ENCODE measurements at regions of chr2 and their contacts with region 1.

Region 1: DNA sequence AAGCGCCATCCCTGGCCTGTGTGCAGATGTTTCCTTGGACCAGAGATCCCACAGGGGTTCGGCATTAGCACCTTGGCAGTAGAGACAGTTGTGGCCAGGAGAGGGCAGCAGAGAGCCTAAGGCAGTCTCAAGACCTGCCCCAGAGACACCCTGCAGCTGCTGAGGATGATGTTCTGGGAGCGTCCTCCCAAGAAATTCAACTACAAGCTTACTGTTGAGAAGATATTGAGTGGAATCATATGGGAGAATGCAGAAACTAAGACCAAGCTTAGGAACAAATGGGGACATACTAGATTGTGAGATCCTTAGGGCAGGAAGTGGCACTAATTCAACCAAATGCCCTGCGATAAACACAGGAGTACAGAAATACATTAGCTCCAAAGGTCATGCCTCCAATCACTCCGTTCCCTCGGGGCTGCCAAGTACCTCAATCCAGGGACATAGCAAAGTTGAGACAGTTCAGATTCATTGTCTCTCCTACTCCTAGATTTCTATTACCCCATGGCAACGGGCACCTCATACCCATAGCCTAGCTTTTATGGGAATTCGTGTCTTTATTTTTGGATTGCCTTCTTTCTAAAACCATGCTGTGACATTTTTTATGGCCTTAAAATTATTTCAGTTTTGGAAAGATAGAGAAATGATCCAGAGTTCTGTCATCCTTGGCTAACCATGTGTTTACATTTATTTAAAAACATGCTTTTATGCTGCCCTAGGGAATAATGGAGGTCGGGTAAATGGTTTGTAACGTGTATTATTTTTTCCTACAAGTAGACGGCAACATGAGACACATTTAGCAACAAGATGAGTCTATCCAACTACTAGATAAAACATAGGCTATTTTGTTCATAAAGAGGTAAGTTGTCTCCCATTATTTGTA is 2.2 kb upstream of the ERMN start:
- DNase-seq: peak; percentile 75 to 94 (median 89)
- ATAC-seq: peak; percentile 95
- H3K4me3 ChIP-seq: peak overlapping the region in 1 of 2 experiments; percentile 2
- H3K4me3 Mint-ChIP-seq: peak overlapping the region; percentile 64
- H3K27ac ChIP-seq: no peak overlapping the region
- H3K27ac Mint-ChIP-seq: peak overlapping the region; percentile 86
- H3K4me1 ChIP-seq: peaks cover 36% of the 10 kb centered on the region
- H3K4me1 Mint-ChIP-seq: peaks cover 53% of the 10 kb centered on the region
- H3K27me3 ChIP-seq: no peaks in the 10 kb centered on the region
- H3K27me3 Mint-ChIP-seq: no peaks in the 10 kb centered on the region
- CTCF ChIP-seq: peak; percentile 87

Region 2: DNA sequence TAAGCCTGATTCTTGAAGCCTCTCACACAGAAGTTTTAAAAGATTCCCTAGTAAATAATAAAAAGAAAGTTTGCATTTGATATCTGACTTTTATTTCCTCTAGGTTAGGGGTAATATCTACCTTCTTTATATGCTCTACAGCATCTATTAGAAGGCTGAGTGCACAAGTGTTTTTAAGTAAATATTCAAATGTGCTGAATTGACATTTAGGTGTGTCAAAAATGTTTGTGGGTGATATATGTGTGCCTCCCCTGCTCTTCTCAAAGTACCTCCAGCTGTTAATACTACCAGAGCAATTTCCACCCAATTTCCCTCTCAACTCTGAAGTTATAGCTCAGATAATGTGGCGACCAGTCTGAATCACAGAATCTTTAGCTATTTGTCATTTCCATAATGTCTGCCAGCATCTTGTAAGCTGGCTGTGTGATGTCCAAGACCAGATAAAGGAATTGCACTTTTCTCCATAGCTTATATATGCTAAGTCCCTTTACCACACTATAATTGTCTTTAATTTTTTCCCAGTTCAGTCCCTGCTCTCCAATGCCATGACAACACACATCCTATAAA is 22.2 kb after region 1 on chr2:
- CTCF ChIA-PET with region 1: interaction called, 16 read pairs
- POLR2A ChIA-PET with region 1: interaction called, 4 read pairs
- intact Hi-C with region 1: loop called in 1 of 2 experiments (anchors 2 kb)
- DNase-seq: no peak
- ATAC-seq: no peak
- H3K4me3 ChIP-seq: no peak overlapping the region
- H3K4me3 Mint-ChIP-seq: no peak overlapping the region
- H3K27ac ChIP-seq: no peak overlapping the region
- H3K27ac Mint-ChIP-seq: no peak overlapping the region
- H3K4me1 ChIP-seq: peaks cover 13% of the 10 kb centered on the region
- H3K4me1 Mint-ChIP-seq: peaks cover 64% of the 10 kb centered on the region
- H3K27me3 ChIP-seq: no peaks in the 10 kb centered on the region
- H3K27me3 Mint-ChIP-seq: no peaks in the 10 kb centered on the region
- CTCF ChIP-seq: no peak

Region 3: GRCh38 chr2:157420771-157421323 is 93.0 kb after region 1 on chr2:
- CTCF ChIA-PET with region 1: interaction called, 21 read pairs
- POLR2A ChIA-PET with region 1: interaction called, 12 read pairs
- intact Hi-C with region 1: no loop called
- DNase-seq: peak in 2 of 9 experiments; percentile 52 to 72
- ATAC-seq: peak; percentile 19
- H3K4me3 ChIP-seq: no peak overlapping the region
- H3K4me3 Mint-ChIP-seq: peak overlapping the region; percentile 47
- H3K27ac ChIP-seq: peak overlapping the region; percentile 2 to 84
- H3K27ac Mint-ChIP-seq: peak overlapping the region; percentile 94
- H3K4me1 ChIP-seq: peaks cover 66% of the 10 kb centered on the region
- H3K4me1 Mint-ChIP-seq: peaks cover 73% of the 10 kb centered on the region
- H3K27me3 ChIP-seq: no peaks in the 10 kb centered on the region
- H3K27me3 Mint-ChIP-seq: no peaks in the 10 kb centered on the region
- CTCF ChIP-seq: no peak

Region 4: GRCh38 chr2:157460384-157460837 is 132.6 kb after region 1 on chr2:
- CTCF ChIA-PET with region 1: interaction called, 32 read pairs
- POLR2A ChIA-PET with region 1: interaction called, 9 read pairs
- intact Hi-C with region 1: no loop called
- DNase-seq: no peak
- ATAC-seq: no peak
- H3K4me3 ChIP-seq: no peak overlapping the region
- H3K4me3 Mint-ChIP-seq: no peak overlapping the region
- H3K27ac ChIP-seq: no peak overlapping the region
- H3K27ac Mint-ChIP-seq: no peak overlapping the region
- H3K4me1 ChIP-seq: peaks cover 52% of the 10 kb centered on the region
- H3K4me1 Mint-ChIP-seq: peaks cover 64% of the 10 kb centered on the region
- H3K27me3 ChIP-seq: no peaks in the 10 kb centered on the region
- H3K27me3 Mint-ChIP-seq: no peaks in the 10 kb centered on the region
- CTCF ChIP-seq: no peak

Region 5: GRCh38 chr2:157492189-157492773 is 164.4 kb after region 1 on chr2:
- CTCF ChIA-PET with region 1: interaction called, 82 read pairs
- POLR2A ChIA-PET with region 1: interaction called, 9 read pairs
- intact Hi-C with region 1: loop called (anchors 1 to 2 kb)
- DNase-seq: peak; percentile 53 to 84 (median 73)
- ATAC-seq: peak; percentile 94
- H3K4me3 ChIP-seq: no peak overlapping the region
- H3K4me3 Mint-ChIP-seq: no peak overlapping the region
- H3K27ac ChIP-seq: no peak overlapping the region
- H3K27ac Mint-ChIP-seq: no peak overlapping the region
- H3K4me1 ChIP-seq: peaks cover 4% of the 10 kb centered on the region
- H3K4me1 Mint-ChIP-seq: peaks cover 38% of the 10 kb centered on the region
- H3K27me3 ChIP-seq: no peaks in the 10 kb centered on the region
- H3K27me3 Mint-ChIP-seq: no peaks in the 10 kb centered on the region
- CTCF ChIP-seq: peak; percentile 86

Region 6: GRCh38 chr2:158006961-158007719 is 679.3 kb after region 1 on chr2:
- CTCF ChIA-PET with region 1: no interaction called
- POLR2A ChIA-PET with region 1: no interaction called
- intact Hi-C with region 1: loop called in 1 of 2 experiments (anchors 1 kb)
- DNase-seq: peak in 1 of 9 experiments; percentile 24
- ATAC-seq: peak; percentile 40
- H3K4me3 ChIP-seq: no peak overlapping the region
- H3K4me3 Mint-ChIP-seq: no peak overlapping the region
- H3K27ac ChIP-seq: no peak overlapping the region
- H3K27ac Mint-ChIP-seq: no peak overlapping the region
- H3K4me1 ChIP-seq: no peaks in the 10 kb centered on the region
- H3K4me1 Mint-ChIP-seq: peaks cover 4% of the 10 kb centered on the region
- H3K27me3 ChIP-seq: no peaks in the 10 kb centered on the region
- H3K27me3 Mint-ChIP-seq: peaks cover 11% of the 10 kb centered on the region
- CTCF ChIP-seq: no peak

Measured in CD8-positive, alpha-beta T cell (primary cell).